Sciatic nerve (tissue), 2 donors: ENCODE measurements at regions of chr3 and their contacts with region 1.

Region 1: DNA sequence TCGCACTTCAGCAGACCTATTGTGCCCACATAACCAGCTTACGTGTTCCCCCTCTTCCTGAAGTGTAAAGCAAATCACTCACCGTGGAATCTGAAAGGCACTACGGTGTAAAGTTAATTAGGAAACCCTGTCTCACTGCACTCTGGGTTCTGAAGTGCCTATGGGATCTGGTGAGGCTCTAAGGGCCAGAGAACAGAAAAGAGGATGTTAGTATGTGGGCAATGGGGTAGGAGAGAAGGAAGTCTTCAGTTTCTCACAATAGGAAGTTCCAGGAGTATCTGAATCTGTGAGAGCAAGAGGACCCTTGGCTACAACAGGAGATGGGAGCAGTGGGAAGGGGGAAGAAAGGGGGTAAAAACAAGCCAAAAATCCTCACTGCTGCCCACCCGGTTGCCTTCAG is 71.4 kb downstream of the ITGB5 start:
- DNase-seq: no peak
- ATAC-seq: no peak

Region 2: GRCh38 chr3:124512881-124513609 is 302.7 kb before region 1 on chr3:
- intact Hi-C with region 1: no loop called
- DNase-seq: no peak
- ATAC-seq: no peak

Region 3: DNA sequence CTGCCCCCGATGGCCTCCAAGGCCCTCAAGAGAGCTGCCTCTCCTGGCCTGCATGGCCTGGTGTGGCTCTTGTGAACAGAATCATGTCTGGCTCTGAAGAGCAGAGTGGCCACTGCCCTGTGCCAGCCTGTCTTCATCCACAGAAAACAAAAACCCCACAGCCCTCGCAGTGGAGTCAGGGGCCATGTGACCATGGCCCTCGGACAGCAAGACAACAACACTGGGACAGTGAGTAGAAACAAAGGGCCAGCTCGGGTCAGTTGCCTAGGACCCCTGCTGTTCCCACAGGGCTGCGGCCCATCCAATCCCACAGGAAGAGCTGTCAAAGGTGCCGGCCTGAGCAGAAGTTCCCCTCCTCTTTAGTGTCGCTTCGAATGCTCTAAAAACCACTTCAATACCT is 13.1 kb before region 1 on chr3:
- intact Hi-C with region 1: loop called (anchors 2 kb)
- DNase-seq: no peak
- ATAC-seq: no peak

Region 4: DNA sequence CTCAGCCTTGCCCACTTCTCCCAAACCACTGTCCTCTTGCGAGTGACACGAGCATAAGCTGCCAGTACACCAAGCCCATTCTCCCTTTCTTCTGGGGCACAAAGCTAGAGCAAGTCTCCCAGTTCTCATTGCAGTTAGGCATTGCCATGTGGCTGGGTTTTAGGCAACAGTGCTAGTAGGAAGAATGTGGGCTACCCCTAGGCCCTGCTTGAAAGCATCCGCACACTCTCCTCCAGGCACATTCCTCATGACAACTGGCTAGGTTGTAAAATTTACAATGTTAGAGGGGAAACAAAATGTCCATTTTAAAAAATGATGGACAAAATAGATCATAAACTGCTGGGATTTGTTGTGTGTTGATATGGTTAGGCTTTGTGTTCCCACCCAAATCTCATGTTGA is 51.7 kb after region 1 on chr3:
- intact Hi-C with region 1: no loop called
- DNase-seq: no peak
- ATAC-seq: no peak